Activated naive CD4-positive, alpha-beta T cell treated with anti-CD3 and anti-CD28 coated beads for 36 hours (primary cell): ENCODE measurements at regions of chr6 and their contacts with region 1.

Region 1: DNA sequence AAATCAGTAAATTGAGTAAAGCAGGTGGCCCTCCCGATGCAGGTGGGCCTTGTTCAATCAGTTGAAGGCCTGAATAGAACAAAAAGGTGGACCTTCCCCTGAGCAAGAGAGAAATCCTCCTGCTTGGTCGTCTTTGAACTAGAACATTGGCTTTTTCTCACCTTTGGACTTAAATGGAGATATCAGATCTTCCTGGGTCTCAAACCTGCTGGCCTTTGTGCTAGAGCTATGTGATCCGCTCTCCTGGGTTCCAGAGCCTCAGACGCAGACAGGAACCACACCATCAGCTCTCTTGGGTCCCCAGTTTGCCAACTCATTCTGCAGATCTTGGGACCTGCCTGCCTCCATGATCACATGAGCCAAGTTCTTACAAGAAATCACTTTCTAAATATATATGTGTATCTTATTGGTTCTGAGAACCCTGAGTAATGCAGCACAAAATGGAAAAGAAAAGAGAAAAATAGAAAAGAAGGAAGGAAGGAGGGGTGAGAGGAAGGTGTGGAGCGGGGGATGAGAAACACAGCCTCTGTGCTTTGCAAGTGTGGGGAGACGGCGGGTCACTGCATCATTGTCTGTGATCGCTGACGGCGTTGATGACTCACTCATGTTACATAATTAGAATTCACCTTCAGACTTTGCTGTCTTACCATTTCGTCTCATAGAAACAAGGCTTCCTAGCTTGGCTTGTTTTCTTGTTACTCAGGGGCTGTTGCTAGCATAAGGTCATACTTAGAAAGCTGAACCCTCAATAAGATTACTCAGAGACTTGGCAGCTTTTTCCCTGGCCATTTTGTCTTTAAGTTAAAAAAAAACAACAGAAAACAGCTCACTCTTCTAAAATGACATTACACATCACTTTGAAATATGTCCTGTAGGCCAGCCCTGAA is 85.7 kb upstream of the NEDD9 start:
- DNase-seq: peak; percentile 91
- H3K4me3 Mint-ChIP-seq: no peak overlapping the region
- H3K27ac Mint-ChIP-seq: peak overlapping the region; percentile 90
- H3K4me1 Mint-ChIP-seq: peaks cover 43% of the 10 kb centered on the region
- H3K27me3 Mint-ChIP-seq: no peaks in the 10 kb centered on the region

Region 2: DNA sequence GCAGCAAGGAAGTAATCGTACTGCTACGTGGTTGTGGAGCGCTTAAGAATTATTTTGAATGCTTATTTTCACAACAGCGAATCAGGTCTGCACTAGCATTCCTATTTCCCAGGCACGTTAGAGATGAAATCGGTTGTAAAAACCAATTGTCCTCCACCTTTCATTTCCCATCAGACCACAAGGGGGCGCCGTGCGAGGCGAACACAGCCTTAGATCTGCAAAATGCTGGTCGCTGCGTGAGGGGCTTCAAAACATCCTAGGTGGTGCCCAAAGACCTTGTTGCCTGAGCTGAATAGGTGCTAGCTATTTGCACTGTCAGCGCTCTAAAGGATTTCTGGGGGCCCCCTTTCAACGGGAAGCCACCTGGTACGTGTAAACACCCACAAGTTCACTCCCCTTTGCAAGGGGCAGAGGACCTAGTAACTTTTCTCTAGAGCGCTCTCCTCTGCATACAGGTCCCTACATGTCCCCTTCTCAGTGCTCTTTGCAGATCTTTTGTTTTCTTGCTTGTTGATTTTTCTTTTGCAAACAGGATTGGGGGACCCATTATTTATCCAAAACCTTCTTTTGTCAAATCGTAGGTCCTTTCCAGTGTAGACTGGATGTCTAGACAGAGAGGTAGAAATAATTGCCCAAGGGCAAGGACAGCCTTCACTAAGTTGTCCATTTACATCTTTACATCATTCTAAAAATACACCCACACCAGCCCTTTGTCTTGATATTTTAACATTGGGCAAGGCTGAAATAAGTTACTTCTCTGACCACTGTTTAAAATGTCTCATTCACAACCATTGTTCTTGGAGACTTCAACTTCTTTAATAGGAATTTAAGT is 145.4 kb before region 1 on chr6:
- CTCF ChIA-PET with region 1: interaction called, 3 read pairs
- intact Hi-C with region 1: loop called (anchors 5 kb)
- DNase-seq: peak; percentile 84
- H3K4me3 Mint-ChIP-seq: no peak overlapping the region
- H3K27ac Mint-ChIP-seq: no peak overlapping the region
- H3K4me1 Mint-ChIP-seq: peaks cover 11% of the 10 kb centered on the region
- H3K27me3 Mint-ChIP-seq: no peaks in the 10 kb centered on the region

Region 3: GRCh38 chr6:11277275-11278206 is 40.6 kb before region 1 on chr6:
- CTCF ChIA-PET with region 1: no interaction called
- intact Hi-C with region 1: loop called (anchors 1 kb)
- DNase-seq: peak; percentile 48
- H3K4me3 Mint-ChIP-seq: peak overlapping the region; percentile 3
- H3K27ac Mint-ChIP-seq: peak overlapping the region; percentile 74
- H3K4me1 Mint-ChIP-seq: peaks cover 42% of the 10 kb centered on the region
- H3K27me3 Mint-ChIP-seq: no peaks in the 10 kb centered on the region

Region 4: DNA sequence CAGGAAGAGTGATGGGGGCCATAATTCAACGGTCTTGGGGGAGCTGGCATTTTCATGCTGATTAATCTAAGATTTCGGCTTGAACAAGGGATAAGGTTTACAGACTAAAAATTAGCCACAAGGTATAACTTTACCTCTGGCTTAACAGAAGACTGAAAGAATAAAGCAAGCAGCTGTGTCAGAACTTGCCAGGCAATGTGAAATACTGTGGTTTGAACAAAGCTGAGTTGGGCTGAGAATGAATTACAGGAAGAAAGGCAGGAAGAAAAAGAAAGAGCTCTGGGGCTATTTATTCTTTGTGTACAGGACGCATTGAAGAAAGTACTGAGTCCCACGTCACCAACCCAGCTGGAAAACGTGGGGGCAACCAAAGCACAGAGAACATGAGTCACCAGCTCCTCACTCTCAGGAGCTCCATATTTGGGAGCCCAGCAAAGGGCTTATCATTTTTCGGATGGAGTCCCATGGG is 35.8 kb after region 1 on chr6:
- CTCF ChIA-PET with region 1: interaction called, 3 read pairs
- intact Hi-C with region 1: loop called (anchors 1 kb)
- DNase-seq: peak; percentile 93
- H3K4me3 Mint-ChIP-seq: peak overlapping the region; percentile 54
- H3K27ac Mint-ChIP-seq: peak overlapping the region; percentile 96
- H3K4me1 Mint-ChIP-seq: peaks cover 82% of the 10 kb centered on the region
- H3K27me3 Mint-ChIP-seq: no peaks in the 10 kb centered on the region

Region 5: DNA sequence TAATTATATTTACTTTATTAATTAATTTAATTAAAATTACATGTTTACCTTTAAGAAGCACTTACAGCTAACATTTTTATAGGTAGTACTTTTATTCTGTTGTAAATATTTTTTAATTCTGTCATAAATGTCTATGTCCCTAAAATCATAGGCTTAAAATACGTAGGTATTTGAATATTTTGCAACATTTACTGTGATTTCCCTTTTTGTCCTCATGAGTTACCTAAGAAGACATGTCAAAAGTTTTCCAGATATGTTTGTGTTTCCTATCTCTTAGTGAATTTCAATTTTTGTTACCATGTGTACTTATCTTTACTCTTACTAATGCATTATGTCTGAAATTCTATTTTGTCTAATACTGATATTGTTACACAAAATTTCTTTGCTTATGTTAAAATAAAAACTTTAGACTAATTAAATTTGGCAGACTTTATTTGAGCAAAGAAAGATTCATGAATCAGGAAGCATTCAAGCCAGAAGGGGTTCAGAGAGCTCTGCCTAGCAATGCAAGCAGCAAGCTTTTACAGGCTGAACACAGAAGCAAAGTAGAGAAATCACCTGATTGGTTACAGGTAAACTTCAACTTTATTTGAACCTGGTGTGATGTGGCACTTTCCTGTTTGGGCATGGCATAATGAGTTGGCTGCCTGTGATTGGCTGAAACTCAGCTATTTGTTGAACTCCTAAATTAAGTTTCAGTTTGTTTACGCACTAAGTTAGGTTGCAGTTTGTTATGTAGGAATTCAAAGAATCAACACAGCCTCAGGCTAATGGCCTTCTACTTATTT is 96.2 kb after region 1 on chr6:
- CTCF ChIA-PET with region 1: no interaction called
- intact Hi-C with region 1: loop called (anchors 1 kb)
- DNase-seq: peak; percentile 60
- H3K4me3 Mint-ChIP-seq: no peak overlapping the region
- H3K27ac Mint-ChIP-seq: no peak overlapping the region
- H3K4me1 Mint-ChIP-seq: peaks cover 33% of the 10 kb centered on the region
- H3K27me3 Mint-ChIP-seq: no peaks in the 10 kb centered on the region

Region 6: DNA sequence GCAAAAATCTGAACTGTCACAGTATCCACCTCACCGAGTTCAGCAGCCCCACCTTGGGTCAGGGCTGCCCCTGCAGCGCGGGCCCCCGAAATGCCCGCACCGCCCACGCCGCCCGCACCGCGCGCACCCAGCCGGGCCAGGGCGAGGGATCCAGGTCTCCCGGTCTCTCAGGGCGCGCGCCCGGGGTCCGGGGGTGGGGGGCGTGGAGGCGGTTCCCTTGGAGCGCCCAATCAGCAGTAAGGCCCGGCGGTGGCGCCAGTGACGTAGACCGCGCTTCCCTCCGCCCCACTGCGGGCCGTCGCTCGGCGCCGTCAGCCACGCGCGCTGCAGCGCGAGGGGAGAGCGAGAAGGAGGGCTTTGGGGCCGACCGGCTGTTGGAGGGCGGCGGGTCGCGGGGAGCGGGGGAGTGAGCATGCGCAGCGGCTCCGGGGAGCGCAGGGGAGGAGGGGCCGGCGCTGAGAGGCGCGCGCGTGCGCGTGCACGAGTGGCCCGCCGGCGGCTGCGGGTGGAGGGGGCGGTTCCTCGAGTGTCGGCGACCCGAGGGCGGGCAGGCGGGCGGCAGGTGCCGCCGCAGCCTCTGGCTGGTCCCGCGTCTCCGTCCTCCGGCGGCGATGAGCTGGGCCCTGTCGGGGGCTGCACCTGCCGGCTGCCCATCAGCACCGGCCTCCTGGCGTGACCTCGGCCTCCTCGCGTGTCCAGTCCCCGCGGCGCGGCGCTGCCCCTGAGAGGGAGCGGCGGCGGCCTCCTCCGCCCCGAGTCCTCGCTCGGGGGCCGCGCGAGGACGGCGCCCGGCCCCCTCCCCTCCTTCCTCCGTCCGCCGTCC is 219.3 kb after region 1 on chr6 and contains the start of gene TMEM170B:
- CTCF ChIA-PET with region 1: no interaction called
- intact Hi-C with region 1: loop called (anchors 5 kb)
- DNase-seq: peak; percentile 84
- H3K4me3 Mint-ChIP-seq: peak within 1 kb of the TSS; percentile 78
- H3K27ac Mint-ChIP-seq: no peak within 1 kb of the TSS
- H3K4me1 Mint-ChIP-seq: peaks cover 9% of the 10 kb centered on the region
- H3K27me3 Mint-ChIP-seq: peaks cover 6% of the 10 kb centered on the region
- total RNA-seq, gene TMEM170B: 0.40 to 0.57 TPM